Caki2 (cell line): ENCODE measurements at regions of chr20 and their contacts with region 1.

Region 1: DNA sequence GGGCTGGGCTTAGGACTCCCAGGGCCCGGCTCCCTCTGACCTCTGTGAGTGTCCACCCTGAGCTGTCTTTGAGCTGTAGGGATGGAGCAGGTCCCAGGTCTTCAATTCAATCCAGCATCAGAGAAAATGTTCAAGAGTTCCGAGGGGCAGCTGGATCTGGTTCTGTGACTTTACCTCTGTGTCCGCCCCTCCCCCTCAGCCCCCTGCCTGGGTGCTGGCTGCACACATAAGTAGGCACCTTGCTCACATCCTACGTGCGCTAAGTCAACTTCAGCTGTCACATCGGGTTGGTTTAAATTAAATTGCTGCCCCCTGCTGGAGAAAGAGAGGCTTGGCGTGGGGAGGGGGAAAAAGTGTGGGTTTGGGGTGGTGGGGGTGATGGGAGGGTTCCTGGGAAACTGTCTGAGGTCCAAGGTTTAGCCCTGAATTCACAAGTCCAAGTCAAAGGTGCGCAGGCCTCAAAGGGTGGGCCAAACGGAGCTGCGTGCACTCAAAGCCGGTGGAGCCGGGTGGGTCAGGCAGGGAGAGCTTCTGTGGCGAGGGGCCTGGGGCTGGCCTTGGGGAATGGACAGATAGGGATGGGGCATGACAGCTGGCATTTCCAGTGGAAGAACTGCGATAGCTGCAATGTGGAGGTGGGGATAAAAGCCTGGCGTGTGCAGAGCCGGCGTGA is 3.0 kb downstream of the WFDC5 start:
- DNase-seq: no peak

Region 2: DNA sequence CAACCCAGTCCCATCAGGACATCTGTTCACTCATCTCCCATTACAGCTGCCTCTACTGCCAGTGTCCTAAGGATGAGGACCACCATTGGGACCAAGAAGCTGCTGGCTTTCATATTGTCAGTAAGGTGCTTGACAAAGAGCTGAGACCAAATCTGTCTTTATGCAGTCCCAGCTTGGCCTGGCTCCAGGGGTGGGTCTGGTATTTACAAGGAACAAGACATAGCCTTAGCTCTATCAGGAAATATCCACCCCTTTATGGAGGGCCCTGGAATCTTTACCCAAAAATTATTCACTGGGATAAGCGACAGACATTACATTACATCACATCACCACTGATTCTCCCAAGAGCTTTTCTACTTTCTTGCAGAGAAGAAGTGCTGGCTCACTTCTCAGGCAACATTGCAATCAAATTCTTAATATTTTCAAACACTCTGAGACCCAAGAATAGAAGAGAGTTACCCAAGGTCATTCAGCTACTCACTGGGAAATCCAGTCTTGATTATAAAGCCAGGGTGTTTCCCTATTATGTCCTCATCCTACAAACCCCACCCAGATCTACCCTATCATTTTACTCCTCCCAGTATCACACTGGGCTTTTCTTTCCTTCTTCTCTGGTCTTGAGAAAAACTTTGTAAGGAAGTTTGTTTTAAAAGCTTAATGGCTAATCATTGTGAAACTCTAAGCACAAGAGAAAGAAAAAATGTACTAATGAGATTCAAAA is 51.3 kb after region 1 on chr20:
- in situ Hi-C with region 1: no loop called
- DNase-seq: no peak

Region 3: GRCh38 chr20:45235995-45236394 is 124.1 kb after region 1 on chr20:
- in situ Hi-C with region 1: no loop called
- DNase-seq: no peak

Region 4: DNA sequence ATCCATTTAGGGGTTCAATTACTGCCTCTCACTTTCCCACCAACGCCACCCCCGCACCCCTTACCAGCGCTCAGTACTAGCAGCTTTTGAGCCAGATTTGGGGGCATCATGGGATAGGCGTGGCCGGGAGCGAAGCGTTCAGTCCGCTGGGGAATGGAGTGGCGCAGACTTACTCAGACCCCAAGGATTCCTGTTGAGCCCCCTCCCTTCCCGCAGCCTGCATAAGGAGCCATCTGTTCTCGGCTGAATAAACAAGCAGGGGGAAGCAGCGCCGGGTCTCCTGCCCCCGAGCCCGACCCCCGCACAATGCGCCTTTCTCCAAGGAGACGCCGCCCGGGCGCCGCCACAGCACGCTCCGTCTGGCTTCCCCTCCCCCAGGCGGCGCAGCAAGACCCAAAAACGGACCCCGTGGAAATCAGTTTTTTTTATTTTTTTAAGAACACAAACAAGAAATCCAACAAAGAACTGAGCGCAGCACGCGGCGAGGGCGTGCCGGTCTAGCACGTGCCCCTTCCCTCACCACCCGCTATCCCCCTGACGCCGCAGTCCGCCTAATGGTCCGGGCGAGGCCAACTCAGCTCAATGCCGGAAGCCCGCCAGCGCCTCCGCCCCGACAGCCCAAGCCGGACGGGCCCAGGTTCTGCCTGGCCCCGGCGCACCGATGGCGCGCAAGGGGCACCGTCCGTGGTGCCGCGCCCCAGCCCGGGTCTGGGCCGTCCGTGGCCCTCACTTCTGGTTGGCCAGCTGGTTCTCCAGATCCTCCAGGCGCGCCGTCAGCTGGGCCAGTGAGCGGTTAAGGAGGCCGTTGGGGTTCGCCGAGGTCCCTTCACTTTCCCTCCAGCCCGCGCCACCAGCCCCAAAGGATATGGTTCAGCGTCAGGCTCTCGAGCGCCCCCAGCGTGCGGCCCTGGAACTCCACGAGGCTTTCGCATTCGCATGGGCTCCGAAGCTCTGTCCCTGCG is 181.4 kb after region 1 on chr20:
- in situ Hi-C with region 1: loop called (anchors 25 kb)
- DNase-seq: peak; percentile 88